Activated CD4-positive, alpha-beta T cell treated with anti-CD3 and anti-CD28 coated beads for 36 hours (primary cell): ENCODE measurements at regions of chr19 and their contacts with region 1.

Region 1: GRCh38 chr19:15555759-15556633 is 47.7 kb downstream of the CYP4F22 start:
- DNase-seq: peak; percentile 99
- ATAC-seq: peak; percentile 86
- H3K4me3 Mint-ChIP-seq: peak overlapping the region; percentile 73
- H3K27ac Mint-ChIP-seq: peak overlapping the region; percentile 85
- H3K4me1 Mint-ChIP-seq: peaks cover 18% of the 10 kb centered on the region
- H3K27me3 Mint-ChIP-seq: peaks cover 2% of the 10 kb centered on the region

Region 2: DNA sequence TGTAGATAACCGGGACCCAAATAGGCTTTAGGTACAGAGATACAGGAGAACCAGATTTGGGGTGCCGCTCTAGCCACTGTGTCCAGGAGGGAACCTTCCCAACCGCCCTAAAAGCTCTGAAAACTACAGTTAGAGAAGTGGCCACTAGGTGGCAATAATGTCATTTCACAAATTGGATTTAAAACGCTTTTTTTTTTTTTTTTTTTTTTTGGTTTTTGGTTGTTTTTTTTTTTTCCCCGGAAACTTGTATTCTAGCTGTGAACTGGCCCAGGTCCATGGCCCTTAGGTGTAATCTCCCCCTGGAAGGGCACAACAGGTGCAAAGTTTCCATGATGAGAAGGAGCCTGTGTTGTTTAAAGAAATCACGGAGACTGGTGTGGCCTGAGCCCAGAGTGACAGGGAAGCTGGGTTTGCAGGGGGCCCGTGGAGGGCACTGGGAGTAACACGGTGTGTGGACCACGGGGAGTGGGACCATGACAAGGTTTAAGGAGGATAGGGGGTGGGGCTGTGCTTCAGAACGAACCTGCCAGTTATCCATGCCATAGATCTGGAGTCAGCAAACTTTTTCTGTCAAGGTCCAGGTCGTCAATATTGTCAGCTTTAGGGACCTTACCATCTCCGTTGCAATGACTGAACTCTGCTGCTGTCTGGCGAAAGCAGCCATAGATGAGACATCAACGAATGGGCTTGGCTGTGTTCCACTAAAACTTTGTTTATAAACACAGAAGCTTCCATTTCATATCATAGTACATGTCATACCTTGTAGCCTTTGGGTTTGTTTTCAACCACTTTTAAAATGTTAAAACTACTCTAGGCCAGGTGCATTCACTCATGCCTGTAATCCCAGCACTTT is 463.9 kb before region 1 on chr19:
- CTCF ChIA-PET with region 1: interaction called, 4 read pairs
- POLR2A ChIA-PET with region 1: no interaction called
- intact Hi-C with region 1: loop called (anchors 1 to 5 kb)
- DNase-seq: peak; percentile 60
- ATAC-seq: peak; percentile 63
- H3K4me3 Mint-ChIP-seq: no peak overlapping the region
- H3K27ac Mint-ChIP-seq: no peak overlapping the region
- H3K4me1 Mint-ChIP-seq: peaks cover 5% of the 10 kb centered on the region
- H3K27me3 Mint-ChIP-seq: peaks cover 8% of the 10 kb centered on the region

Region 3: DNA sequence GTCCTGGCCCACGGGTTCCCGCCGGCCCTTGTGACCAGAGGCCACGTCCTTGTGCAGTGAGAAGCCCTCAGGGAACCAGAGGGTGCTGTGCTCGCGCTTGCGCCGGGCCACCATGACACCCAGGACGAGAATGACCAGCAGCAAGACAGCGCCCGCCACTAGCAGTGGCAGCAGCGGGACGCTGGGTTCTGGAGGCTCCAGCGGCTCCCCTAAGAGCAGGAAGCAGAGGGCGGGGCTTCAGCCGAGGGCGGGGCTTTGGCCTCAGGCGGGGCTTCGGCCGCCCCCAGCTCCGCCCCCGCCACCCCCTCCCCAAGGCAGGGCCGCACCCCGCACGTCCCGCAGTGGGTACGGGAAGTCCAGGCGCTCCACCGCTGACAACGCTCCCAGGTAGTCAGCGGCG is 385.7 kb before region 1 on chr19:
- CTCF ChIA-PET with region 1: no interaction called
- POLR2A ChIA-PET with region 1: no interaction called
- intact Hi-C with region 1: no loop called
- DNase-seq: no peak
- ATAC-seq: no peak
- H3K4me3 Mint-ChIP-seq: no peak overlapping the region
- H3K27ac Mint-ChIP-seq: no peak overlapping the region
- H3K4me1 Mint-ChIP-seq: no peaks in the 10 kb centered on the region
- H3K27me3 Mint-ChIP-seq: no peaks in the 10 kb centered on the region

Region 4: DNA sequence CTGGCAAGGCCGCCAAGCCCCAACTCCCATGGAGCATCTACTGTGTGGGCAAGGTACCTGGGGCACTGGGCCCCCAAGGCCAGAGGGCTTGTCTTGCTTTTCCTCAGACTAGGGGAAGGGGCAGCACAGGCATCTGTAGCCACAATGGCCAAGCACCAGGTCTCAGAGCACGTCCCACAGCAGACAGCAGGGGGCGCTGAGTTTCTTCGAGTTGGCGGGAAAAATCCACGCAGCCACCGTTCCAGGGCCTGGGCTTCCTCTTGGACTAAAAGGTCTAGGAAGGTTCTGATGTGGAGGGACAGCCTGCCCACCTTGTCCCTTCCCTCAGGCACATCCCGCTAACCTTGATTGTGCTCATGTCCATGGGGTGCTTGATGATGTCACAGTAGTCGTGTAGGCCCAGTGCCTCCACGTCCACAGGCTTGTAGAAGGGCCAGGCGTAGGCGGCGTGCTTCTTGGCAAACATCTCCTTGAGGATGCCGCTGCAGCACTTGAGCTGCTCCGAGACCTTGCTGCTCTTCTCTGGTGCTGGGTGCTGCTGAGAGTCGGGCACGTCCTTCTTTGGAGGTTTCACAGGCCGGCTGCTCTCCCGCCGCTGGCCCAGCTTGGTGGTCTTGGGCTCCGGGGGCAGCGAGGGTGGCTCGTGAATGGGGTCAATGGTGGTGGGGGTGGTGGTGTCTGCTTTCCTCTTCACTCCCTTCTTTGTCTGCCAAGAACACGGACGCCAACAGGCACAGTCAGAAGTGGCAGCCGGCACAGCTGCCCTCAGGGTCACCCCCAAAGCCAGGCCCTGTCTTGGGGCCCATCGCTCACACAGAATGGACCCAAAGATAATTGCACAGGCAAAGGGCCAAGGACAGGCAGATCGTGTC is 291.7 kb before region 1 on chr19:
- CTCF ChIA-PET with region 1: no interaction called
- POLR2A ChIA-PET with region 1: no interaction called
- intact Hi-C with region 1: loop called (anchors 1 kb)
- DNase-seq: peak; percentile 86
- ATAC-seq: peak; percentile 77
- H3K4me3 Mint-ChIP-seq: no peak overlapping the region
- H3K27ac Mint-ChIP-seq: no peak overlapping the region
- H3K4me1 Mint-ChIP-seq: peaks cover 8% of the 10 kb centered on the region
- H3K27me3 Mint-ChIP-seq: no peaks in the 10 kb centered on the region

Region 5: DNA sequence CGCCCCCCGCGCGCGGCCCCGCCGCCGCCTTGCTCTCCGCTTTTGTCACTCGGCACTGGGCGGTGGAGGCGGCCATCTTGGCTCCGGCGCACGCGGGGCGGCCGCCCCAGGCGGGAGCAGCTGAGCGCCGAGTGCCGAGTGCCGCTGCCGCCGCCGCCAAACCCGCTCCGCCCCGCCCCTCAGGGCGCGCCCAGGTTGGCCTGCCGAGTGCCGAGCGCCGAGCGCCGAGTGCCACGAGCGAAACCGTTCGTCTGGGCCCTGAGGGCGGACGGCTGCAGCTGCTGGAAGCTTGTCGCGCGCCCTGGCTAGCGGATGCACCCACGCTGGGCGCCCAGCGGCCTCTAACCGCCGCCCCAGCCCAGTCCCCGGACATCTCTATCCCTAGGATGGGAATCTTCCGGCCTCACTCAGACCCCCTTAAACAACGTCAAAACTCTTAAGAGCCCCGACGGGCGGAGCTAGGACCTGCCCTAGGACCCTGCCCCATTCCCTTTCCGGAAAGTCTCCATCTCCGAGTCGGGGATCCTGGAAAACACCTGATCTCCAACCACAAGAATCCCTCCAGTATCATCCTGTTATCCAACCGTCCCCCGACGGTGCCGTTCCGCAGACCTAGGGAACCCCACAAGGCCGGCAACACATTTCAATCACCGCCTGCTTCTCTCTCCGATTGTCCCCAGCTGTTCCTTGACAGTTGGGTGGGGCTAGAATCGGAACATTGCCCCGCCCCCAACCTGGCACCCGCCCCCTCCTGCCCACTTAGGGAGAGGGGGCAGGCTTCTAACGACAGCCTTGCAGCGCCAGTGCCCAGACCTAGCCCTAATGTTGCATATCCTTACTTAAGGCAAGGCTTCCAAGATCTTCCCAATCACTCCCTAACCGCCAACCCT is 123.1 kb before region 1 on chr19:
- CTCF ChIA-PET with region 1: interaction called, 6 read pairs
- POLR2A ChIA-PET with region 1: no interaction called
- intact Hi-C with region 1: loop called (anchors 1 kb)
- DNase-seq: peak; percentile 97
- ATAC-seq: peak; percentile 87
- H3K4me3 Mint-ChIP-seq: peak overlapping the region; percentile 87
- H3K27ac Mint-ChIP-seq: peak overlapping the region; percentile 91
- H3K4me1 Mint-ChIP-seq: peaks cover 26% of the 10 kb centered on the region
- H3K27me3 Mint-ChIP-seq: no peaks in the 10 kb centered on the region

Region 6: GRCh38 chr19:15508035-15508710 is 47.8 kb before region 1 on chr19 and contains the start of gene CYP4F22:
- CTCF ChIA-PET with region 1: interaction called, 3 read pairs
- POLR2A ChIA-PET with region 1: no interaction called
- intact Hi-C with region 1: loop called in 1 of 2 experiments (anchors 1 kb)
- DNase-seq: peak; percentile 32
- ATAC-seq: peak; percentile 44
- H3K4me3 Mint-ChIP-seq: peak within 1 kb of the TSS; percentile 65
- H3K27ac Mint-ChIP-seq: peak within 1 kb of the TSS; percentile 14
- H3K4me1 Mint-ChIP-seq: peaks cover 10% of the 10 kb centered on the region
- H3K27me3 Mint-ChIP-seq: peaks cover 22% of the 10 kb centered on the region
- total RNA-seq, gene CYP4F22: 0.54 to 0.80 TPM

Region 7: GRCh38 chr19:15759962-15760565 is 204.1 kb after region 1 on chr19:
- CTCF ChIA-PET with region 1: no interaction called
- POLR2A ChIA-PET with region 1: no interaction called
- intact Hi-C with region 1: no loop called
- DNase-seq: peak; percentile 18
- ATAC-seq: no peak
- H3K4me3 Mint-ChIP-seq: no peak overlapping the region
- H3K27ac Mint-ChIP-seq: no peak overlapping the region
- H3K4me1 Mint-ChIP-seq: no peaks in the 10 kb centered on the region
- H3K27me3 Mint-ChIP-seq: peaks cover 47% of the 10 kb centered on the region